MCF 10A (cell line): ENCODE measurements at regions of chr1 and their contacts with region 1.

Region 1: GRCh38 chr1:44674113-44675000 is at the starts of genes ARMH1 and TMEM53:
- DNase-seq: peak; percentile 99
- H3K4me3 Mint-ChIP-seq: peak within 1 kb of the TSS; percentile 74
- H3K27ac Mint-ChIP-seq: peak within 1 kb of the TSS; percentile 96
- H3K4me1 Mint-ChIP-seq: peaks cover 17% of the 10 kb centered on the region
- H3K27me3 Mint-ChIP-seq: no peaks in the 10 kb centered on the region
- CTCF ChIP-seq: no peak
- total RNA-seq, gene ARMH1: 0.65 and 0.96 TPM in 2 replicates
- total RNA-seq, gene TMEM53: 2.2 TPM in 2 replicates

Region 2: DNA sequence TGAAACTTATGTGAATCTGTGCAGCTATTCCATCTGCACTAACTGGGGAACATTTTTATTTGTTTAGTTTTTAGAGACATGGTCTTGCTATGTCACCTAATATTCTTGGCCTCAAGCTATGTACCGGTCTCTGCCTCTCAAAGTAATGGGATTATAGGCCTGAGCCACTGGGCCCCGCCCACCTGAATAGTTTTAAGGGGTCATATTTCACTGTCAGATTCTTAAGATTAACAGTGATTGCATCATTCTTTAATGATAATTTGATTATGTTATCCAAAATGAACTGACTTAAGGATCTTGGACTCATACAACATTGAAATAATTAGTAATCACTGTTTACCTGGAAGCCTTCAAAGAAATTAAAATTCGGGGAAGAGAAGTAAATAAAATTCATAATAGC is 520.3 kb before region 1 on chr1:
- CTCF ChIA-PET with region 1: no interaction called
- POLR2A ChIA-PET with region 1: no interaction called
- intact Hi-C with region 1: no loop called
- DNase-seq: peak; percentile 6
- H3K4me3 Mint-ChIP-seq: no peak overlapping the region
- H3K27ac Mint-ChIP-seq: peak overlapping the region; percentile 63
- H3K4me1 Mint-ChIP-seq: peaks cover 22% of the 10 kb centered on the region
- H3K27me3 Mint-ChIP-seq: no peaks in the 10 kb centered on the region
- CTCF ChIP-seq: no peak

Region 3: DNA sequence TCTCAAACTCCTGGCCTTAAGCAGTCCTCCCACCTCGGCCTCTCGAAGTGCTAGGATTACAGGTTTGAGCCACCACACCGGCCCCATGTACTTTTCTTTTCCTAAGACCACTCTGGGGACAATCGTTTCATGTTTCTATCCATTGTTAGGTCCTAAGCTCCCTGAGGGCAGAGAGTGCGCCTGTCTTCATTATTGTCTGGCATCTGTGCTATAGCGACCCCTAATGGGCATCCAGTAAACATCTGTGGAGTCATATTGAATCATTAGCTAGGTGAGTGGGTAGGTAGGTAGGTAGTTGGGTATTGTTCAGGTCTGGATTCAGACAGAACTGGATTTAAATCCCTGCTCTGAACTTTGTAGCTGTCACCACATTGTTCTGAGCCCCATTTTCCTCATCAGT is 66.2 kb before region 1 on chr1:
- CTCF ChIA-PET with region 1: no interaction called
- POLR2A ChIA-PET with region 1: no interaction called
- intact Hi-C with region 1: no loop called
- DNase-seq: no peak
- H3K4me3 Mint-ChIP-seq: no peak overlapping the region
- H3K27ac Mint-ChIP-seq: no peak overlapping the region
- H3K4me1 Mint-ChIP-seq: peaks cover 7% of the 10 kb centered on the region
- H3K27me3 Mint-ChIP-seq: no peaks in the 10 kb centered on the region
- CTCF ChIP-seq: peak; percentile 14

Region 4: GRCh38 chr1:44631647-44632539 is 42.5 kb before region 1 on chr1:
- CTCF ChIA-PET with region 1: no interaction called
- POLR2A ChIA-PET with region 1: interaction called, 22 read pairs
- intact Hi-C with region 1: no loop called
- DNase-seq: peak; percentile 87
- H3K4me3 Mint-ChIP-seq: peak overlapping the region; percentile 79
- H3K27ac Mint-ChIP-seq: peak overlapping the region; percentile 98
- H3K4me1 Mint-ChIP-seq: peaks cover 20% of the 10 kb centered on the region
- H3K27me3 Mint-ChIP-seq: no peaks in the 10 kb centered on the region
- CTCF ChIP-seq: no peak

Region 5: DNA sequence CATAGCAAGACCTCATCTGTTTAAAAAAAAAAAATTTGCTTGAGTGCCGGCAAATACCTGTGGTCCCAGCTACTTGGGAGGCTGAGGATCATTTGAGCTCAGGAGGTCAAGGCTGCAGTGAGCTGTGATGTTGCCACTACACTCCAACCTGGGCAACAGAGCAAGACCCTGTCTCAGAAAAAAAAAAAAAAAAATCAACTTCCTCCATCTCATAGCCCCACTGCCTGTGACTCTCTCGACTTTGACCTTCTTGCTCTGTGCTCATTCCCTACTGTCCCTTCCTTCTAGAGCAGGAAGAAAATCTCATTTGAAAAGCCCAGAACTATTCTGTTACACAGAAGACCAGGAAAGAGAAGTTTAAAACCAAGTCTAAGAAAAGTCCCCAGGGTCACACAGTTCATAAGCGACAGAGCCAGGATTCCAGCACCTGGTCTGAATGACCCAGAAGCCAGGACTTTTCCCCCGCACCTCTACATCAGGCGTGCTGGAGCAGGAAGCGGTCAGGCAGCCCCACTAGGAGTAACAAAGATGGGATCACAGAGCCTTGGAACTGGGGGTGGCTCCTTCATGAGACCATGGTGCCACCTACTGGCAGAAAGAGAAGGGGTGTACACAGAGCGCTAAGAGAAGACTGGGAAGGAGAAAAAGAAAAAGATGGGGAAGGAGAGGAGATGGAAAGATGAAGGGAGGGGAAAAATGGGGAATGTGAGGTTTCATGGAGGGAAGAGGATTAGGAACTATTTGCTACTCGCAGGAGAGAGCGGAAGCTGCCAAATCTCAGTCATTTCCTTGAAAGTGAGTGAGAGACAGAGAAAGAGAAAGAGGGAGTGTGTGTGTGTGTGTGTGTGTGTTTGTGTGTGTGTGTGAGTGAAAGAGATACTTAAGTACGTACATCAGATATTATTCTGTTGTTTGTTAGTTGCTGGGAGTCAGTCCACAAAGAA is 1505.1 kb after region 1 on chr1:
- CTCF ChIA-PET with region 1: no interaction called
- POLR2A ChIA-PET with region 1: no interaction called
- intact Hi-C with region 1: no loop called
- DNase-seq: peak; percentile 94
- H3K4me3 Mint-ChIP-seq: no peak overlapping the region
- H3K27ac Mint-ChIP-seq: no peak overlapping the region
- H3K4me1 Mint-ChIP-seq: peaks cover 7% of the 10 kb centered on the region
- H3K27me3 Mint-ChIP-seq: no peaks in the 10 kb centered on the region
- CTCF ChIP-seq: peak; percentile 89